IMR-90 (cell line): ENCODE measurements at regions of chr11 and their contacts with region 1.

Region 1: GRCh38 chr11:121024982-121025381 is 1.1 kb downstream of the TBCEL start:
- DNase-seq: peak; percentile 9
- ATAC-seq: no peak
- H3K4me3 ChIP-seq: peak overlapping the region; percentile 62
- H3K27ac ChIP-seq: no peak overlapping the region
- H3K4me1 ChIP-seq: peaks cover 4% of the 10 kb centered on the region
- H3K27me3 ChIP-seq: no peaks in the 10 kb centered on the region
- CTCF ChIP-seq: no peak
- POLR2A ChIP-seq: no peak
- RAD21 ChIP-seq: no peak

Region 2: DNA sequence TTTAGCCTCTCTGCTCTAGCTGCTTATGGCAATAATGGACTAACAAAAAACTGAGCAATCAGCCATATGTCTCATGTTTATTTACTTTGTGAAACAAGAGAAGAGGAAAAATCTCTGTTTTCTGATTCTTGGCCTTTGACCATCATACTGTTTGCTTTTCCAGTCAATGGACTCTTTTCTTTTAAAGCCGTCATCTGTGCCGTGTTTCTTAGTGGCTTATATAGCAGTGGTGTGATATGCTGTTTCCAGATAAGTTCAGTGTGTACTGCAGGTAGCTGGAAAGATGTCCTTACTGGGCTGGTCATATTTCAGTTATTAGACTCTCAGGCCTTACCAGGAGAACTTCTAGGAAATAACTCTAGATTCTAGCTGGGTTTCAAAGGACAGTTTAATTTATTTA is 42.5 kb after region 1 on chr11:
- CTCF ChIA-PET with region 1: interaction called, 3 read pairs
- POLR2A ChIA-PET with region 1: no interaction called
- dilution Hi-C with region 1: no loop called
- in situ Hi-C with region 1: no loop called
- intact Hi-C with region 1: loop called (anchors 5 kb)
- DNase-seq: peak; percentile 70
- ATAC-seq: peak; percentile 82
- H3K4me3 ChIP-seq: no peak overlapping the region
- H3K27ac ChIP-seq: no peak overlapping the region
- H3K4me1 ChIP-seq: peaks cover 5% of the 10 kb centered on the region; the same call in 1 of the 2 replicates
- H3K27me3 ChIP-seq: no peaks in the 10 kb centered on the region
- CTCF ChIP-seq: no peak
- POLR2A ChIP-seq: no peak
- RAD21 ChIP-seq: no peak

Region 3: GRCh38 chr11:121105063-121105480 is 80.1 kb after region 1 on chr11:
- CTCF ChIA-PET with region 1: no interaction called
- POLR2A ChIA-PET with region 1: no interaction called
- dilution Hi-C with region 1: no loop called
- in situ Hi-C with region 1: no loop called
- intact Hi-C with region 1: loop called (anchors 5 kb)
- DNase-seq: peak; percentile 13
- ATAC-seq: peak; percentile 48
- H3K4me3 ChIP-seq: no peak overlapping the region
- H3K27ac ChIP-seq: no peak overlapping the region
- H3K4me1 ChIP-seq: peaks cover 4% of the 10 kb centered on the region
- H3K27me3 ChIP-seq: peaks cover 52% of the 10 kb centered on the region
- CTCF ChIP-seq: no peak
- POLR2A ChIP-seq: no peak
- RAD21 ChIP-seq: no peak